Naive thymus-derived CD4-positive, alpha-beta T cell (primary cell): ENCODE measurements at regions of chr10 and their contacts with region 1.

Region 1: GRCh38 chr10:114304017-114304570 is 65.0 kb downstream of the VWA2 start:
- DNase-seq: peak; percentile 19 to 67 (median 52)
- ATAC-seq: peak; percentile 60
- H3K4me3 ChIP-seq: peak overlapping the region; percentile 68
- H3K4me3 Mint-ChIP-seq: peak overlapping the region; percentile 83 to 94 (median 92)
- H3K27ac ChIP-seq: peak overlapping the region; percentile 6
- H3K27ac Mint-ChIP-seq: peak overlapping the region in 8 of 9 donors; percentile 4 to 86 (median 68)
- H3K4me1 ChIP-seq: peaks cover 4 to 5% of the 10 kb centered on the region in 2 donors
- H3K4me1 Mint-ChIP-seq: peaks cover 9 to 13% (median 12%) of the 10 kb centered on the region in 7 donors
- H3K27me3 ChIP-seq: no peaks in the 10 kb centered on the region
- H3K27me3 Mint-ChIP-seq: no peaks in the 10 kb centered on the region

Region 2: DNA sequence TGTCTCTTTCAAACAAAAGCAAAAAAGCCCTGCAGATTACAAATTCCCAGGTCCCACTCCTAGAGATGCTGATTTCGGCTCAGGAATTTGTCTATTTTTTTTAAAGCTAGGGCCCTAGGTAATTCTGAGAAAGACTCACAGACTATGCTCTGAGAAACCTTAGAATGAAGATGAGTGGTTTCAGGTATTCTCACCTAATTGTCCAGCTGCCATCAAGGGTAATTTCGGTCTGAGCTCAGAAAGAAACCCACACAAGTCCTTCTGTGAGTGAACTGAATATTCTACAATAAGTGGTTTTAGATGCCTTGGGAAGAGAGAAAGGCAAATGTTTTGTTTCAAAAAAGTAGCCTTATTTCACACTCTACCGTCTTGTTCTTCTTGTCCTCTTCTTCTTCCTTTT is 495.9 kb before region 1 on chr10:
- CTCF ChIA-PET with region 1: no interaction called
- POLR2A ChIA-PET with region 1: no interaction called
- intact Hi-C with region 1: no loop called
- DNase-seq: no peak
- ATAC-seq: no peak
- H3K4me3 ChIP-seq: no peak overlapping the region
- H3K4me3 Mint-ChIP-seq: no peak overlapping the region
- H3K27ac ChIP-seq: no peak overlapping the region
- H3K27ac Mint-ChIP-seq: no peak overlapping the region
- H3K4me1 ChIP-seq: no peaks in the 10 kb centered on the region
- H3K4me1 Mint-ChIP-seq: no peaks in the 10 kb centered on the region
- H3K27me3 ChIP-seq: no peaks in the 10 kb centered on the region
- H3K27me3 Mint-ChIP-seq: peaks cover 17 to 61% (median 26%) of the 10 kb centered on the region in 5 donors

Region 3: GRCh38 chr10:114458955-114459354 is 154.9 kb after region 1 on chr10:
- CTCF ChIA-PET with region 1: no interaction called
- POLR2A ChIA-PET with region 1: interaction called, 3 read pairs
- intact Hi-C with region 1: loop called (anchors 1 to 5 kb)
- DNase-seq: peak in 1 of 9 donors; percentile 31
- ATAC-seq: peak; percentile 58
- H3K4me3 ChIP-seq: no peak overlapping the region
- H3K4me3 Mint-ChIP-seq: peak overlapping the region in 1 of 10 donors; percentile 12
- H3K27ac ChIP-seq: no peak overlapping the region
- H3K27ac Mint-ChIP-seq: peak overlapping the region in 8 of 9 donors; percentile 35 to 78 (median 56)
- H3K4me1 ChIP-seq: no peaks in the 10 kb centered on the region
- H3K4me1 Mint-ChIP-seq: peaks cover 10 to 48% (median 31%) of the 10 kb centered on the region in 7 donors
- H3K27me3 ChIP-seq: no peaks in the 10 kb centered on the region
- H3K27me3 Mint-ChIP-seq: no peaks in the 10 kb centered on the region

Region 4: DNA sequence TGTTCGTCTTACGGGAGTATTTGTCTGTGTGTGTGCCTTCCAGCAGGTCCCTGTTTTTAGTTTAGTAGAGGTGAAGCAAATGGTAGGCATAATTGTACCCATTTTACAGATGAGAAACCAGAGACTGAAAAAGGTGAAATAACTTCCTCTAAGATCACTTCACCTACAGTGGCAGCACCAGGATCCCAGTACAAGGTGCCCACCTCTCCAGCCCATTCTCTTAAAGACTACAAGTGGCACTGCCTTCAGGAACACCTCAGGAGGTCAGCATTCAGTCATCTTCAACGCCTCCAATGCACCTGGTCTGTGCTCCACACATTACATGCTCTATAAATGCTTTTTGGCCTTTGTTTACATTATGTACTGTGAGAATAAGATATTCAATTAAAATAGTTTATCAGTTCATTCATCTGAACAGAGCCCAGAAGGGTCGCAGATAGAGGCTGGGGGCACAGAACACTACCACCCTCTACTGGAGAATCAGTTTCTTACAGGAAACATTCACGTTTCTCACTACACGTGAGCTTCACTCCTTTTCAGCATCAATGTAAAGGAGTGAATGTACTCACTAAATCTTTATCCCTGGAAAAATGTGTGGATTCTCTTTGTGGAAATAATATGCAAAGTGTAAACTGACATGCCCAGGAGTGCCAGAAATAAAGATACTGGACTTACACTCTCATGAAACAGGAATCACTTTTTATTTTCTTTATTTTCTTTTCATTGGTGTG is 399.4 kb after region 1 on chr10:
- CTCF ChIA-PET with region 1: interaction called, 11 read pairs
- POLR2A ChIA-PET with region 1: no interaction called
- intact Hi-C with region 1: loop called in 1 of 2 experiments (anchors 1 kb)
- DNase-seq: peak in 7 of 9 donors; percentile 6 to 46 (median 24)
- ATAC-seq: peak; percentile 67
- H3K4me3 ChIP-seq: no peak overlapping the region
- H3K4me3 Mint-ChIP-seq: no peak overlapping the region
- H3K27ac ChIP-seq: no peak overlapping the region
- H3K27ac Mint-ChIP-seq: no peak overlapping the region
- H3K4me1 ChIP-seq: no peaks in the 10 kb centered on the region
- H3K4me1 Mint-ChIP-seq: no peaks in the 10 kb centered on the region
- H3K27me3 ChIP-seq: no peaks in the 10 kb centered on the region
- H3K27me3 Mint-ChIP-seq: peaks cover 0 to 45% (median 9%) of the 10 kb centered on the region in 5 donors

Region 5: GRCh38 chr10:114876602-114877300 is 572.7 kb after region 1 on chr10:
- CTCF ChIA-PET with region 1: interaction called, 3 read pairs
- POLR2A ChIA-PET with region 1: no interaction called
- intact Hi-C with region 1: loop called in 1 of 2 experiments (anchors 5 kb)
- DNase-seq: peak in 2 of 9 donors; percentile 2 to 55
- ATAC-seq: peak; percentile 63
- H3K4me3 ChIP-seq: no peak overlapping the region
- H3K4me3 Mint-ChIP-seq: no peak overlapping the region
- H3K27ac ChIP-seq: no peak overlapping the region
- H3K27ac Mint-ChIP-seq: no peak overlapping the region
- H3K4me1 ChIP-seq: no peaks in the 10 kb centered on the region
- H3K4me1 Mint-ChIP-seq: peaks cover 0 to 30% (median 12%) of the 10 kb centered on the region in 7 donors
- H3K27me3 ChIP-seq: peaks cover 0 to 5% of the 10 kb centered on the region in 2 donors
- H3K27me3 Mint-ChIP-seq: peaks cover 36 to 76% (median 44%) of the 10 kb centered on the region in 5 donors

Region 6: DNA sequence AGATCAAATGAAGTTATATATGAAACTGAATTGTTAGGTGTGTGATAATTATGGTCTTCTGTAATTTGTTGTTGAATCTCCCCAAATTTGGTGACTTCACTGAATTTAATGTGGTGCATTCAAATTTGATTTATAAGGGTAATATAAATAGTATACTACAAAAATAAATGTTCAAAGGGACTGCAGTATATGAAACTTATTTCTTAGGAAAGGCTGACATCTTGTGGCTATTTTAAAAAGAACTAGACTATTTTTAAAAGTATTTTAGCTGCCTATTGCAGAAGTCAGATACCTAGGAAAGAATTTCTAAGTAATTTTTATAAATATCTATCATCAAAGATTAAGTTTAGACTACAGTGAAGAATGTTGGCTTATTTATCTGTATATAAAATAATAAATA is 825.7 kb after region 1 on chr10:
- CTCF ChIA-PET with region 1: interaction called, 3 read pairs
- POLR2A ChIA-PET with region 1: no interaction called
- intact Hi-C with region 1: loop called in 1 of 2 experiments (anchors 1 kb)
- DNase-seq: peak in 4 of 9 donors; percentile 2 to 14 (median 6)
- ATAC-seq: no peak
- H3K4me3 ChIP-seq: no peak overlapping the region
- H3K4me3 Mint-ChIP-seq: no peak overlapping the region
- H3K27ac ChIP-seq: no peak overlapping the region
- H3K27ac Mint-ChIP-seq: no peak overlapping the region
- H3K4me1 ChIP-seq: no peaks in the 10 kb centered on the region
- H3K4me1 Mint-ChIP-seq: no peaks in the 10 kb centered on the region
- H3K27me3 ChIP-seq: no peaks in the 10 kb centered on the region
- H3K27me3 Mint-ChIP-seq: peaks cover 1 to 18% (median 12%) of the 10 kb centered on the region in 5 donors